Ovary (tissue), 10 donors: ENCODE measurements at regions of chr3 and their contacts with region 1.

Region 1: GRCh38 chr3:45656575-45657363 is 32.4 kb upstream of the SACM1L start:
- DNase-seq: peak; percentile 84 to 91 (median 87)
- H3K4me3 ChIP-seq: no peak overlapping the region
- H3K27ac ChIP-seq: no peak overlapping the region
- H3K4me1 ChIP-seq: peaks cover 3% of the 10 kb centered on the region
- H3K27me3 ChIP-seq: no peaks in the 10 kb centered on the region
- CTCF ChIP-seq: peak; percentile 87 to 93 (median 91)
- EP300 ChIP-seq: no peak
- POLR2A ChIP-seq: no peak

Region 2: GRCh38 chr3:45224824-45225464 is 431.8 kb before region 1 on chr3:
- intact Hi-C with region 1: loop called in 1 of 4 experiments (anchors 5 kb)
- DNase-seq: peak; percentile 37 to 76 (median 53)
- H3K4me3 ChIP-seq: peak overlapping the region; percentile 54
- H3K27ac ChIP-seq: no peak overlapping the region
- H3K4me1 ChIP-seq: no peaks in the 10 kb centered on the region
- H3K27me3 ChIP-seq: no peaks in the 10 kb centered on the region
- CTCF ChIP-seq: no peak
- EP300 ChIP-seq: no peak
- POLR2A ChIP-seq: no peak

Region 3: GRCh38 chr3:45507820-45508317 is 148.9 kb before region 1 on chr3:
- intact Hi-C with region 1: loop called (anchors 2 to 5 kb)
- DNase-seq: no peak
- H3K4me3 ChIP-seq: no peak overlapping the region
- H3K27ac ChIP-seq: no peak overlapping the region
- H3K4me1 ChIP-seq: no peaks in the 10 kb centered on the region
- H3K27me3 ChIP-seq: no peaks in the 10 kb centered on the region
- CTCF ChIP-seq: no peak
- EP300 ChIP-seq: no peak
- POLR2A ChIP-seq: no peak

Region 4: GRCh38 chr3:45516829-45517228 is 139.9 kb before region 1 on chr3:
- intact Hi-C with region 1: loop called in 3 of 4 experiments (anchors 2 to 5 kb)
- DNase-seq: no peak
- H3K4me3 ChIP-seq: no peak overlapping the region
- H3K27ac ChIP-seq: no peak overlapping the region
- H3K4me1 ChIP-seq: no peaks in the 10 kb centered on the region
- H3K27me3 ChIP-seq: no peaks in the 10 kb centered on the region
- CTCF ChIP-seq: no peak
- EP300 ChIP-seq: no peak
- POLR2A ChIP-seq: no peak

Region 5: GRCh38 chr3:45524565-45524964 is 132.2 kb before region 1 on chr3:
- intact Hi-C with region 1: loop called in 1 of 4 experiments (anchors 5 kb)
- DNase-seq: no peak
- H3K4me3 ChIP-seq: no peak overlapping the region
- H3K27ac ChIP-seq: no peak overlapping the region
- H3K4me1 ChIP-seq: no peaks in the 10 kb centered on the region
- H3K27me3 ChIP-seq: no peaks in the 10 kb centered on the region
- CTCF ChIP-seq: no peak
- EP300 ChIP-seq: no peak
- POLR2A ChIP-seq: no peak

Region 6: DNA sequence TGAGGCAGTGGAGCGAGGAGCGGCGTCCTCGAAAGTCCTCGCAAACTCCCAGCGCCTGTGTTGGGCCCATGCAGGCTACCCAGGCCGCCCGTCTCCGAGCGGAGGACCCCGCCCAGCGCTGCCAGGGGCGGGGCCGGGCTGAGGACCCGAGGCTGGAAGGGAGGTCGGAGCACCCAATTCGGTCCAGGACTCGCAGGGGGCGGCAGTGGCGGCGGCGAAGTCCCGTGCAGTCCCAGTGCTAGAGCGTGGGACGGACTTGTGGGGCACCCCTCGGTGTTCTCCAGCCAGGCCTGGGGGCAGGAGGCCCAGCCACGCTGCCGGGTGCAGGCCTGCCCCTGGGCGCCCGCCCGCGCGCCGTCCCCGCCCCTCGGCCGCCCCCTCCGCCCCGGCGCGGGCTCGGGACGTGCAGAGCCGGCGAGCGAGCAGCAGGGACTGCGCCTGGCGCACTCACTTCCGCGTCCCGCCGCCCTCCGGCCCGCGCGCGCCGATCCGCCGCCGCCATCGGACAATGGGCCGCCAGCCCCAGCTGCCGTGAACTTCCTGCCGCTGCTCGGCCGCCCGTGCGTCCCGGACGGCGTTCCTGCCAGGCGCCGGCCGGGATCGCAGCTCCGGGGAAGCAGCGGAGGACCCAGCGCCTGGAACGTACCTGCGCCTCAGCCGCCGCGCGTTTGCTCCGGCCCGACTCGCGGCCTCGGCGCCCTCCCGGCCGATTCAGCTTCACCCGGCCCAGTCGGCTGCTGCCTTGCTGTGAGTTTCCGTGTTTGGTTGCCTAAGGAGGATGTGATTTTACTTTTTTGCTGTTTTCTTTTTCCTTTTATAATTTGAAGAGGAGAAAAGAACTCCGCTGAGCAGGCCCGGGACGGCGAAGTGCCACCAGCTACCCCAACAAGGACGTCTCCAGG is 62.8 kb before region 1 on chr3:
- intact Hi-C with region 1: loop called (anchors 2 to 10 kb)
- DNase-seq: peak; percentile 59 to 80 (median 65)
- H3K4me3 ChIP-seq: peak overlapping the region; percentile 56
- H3K27ac ChIP-seq: peak overlapping the region; percentile 6 to 78
- H3K4me1 ChIP-seq: peaks cover 29% of the 10 kb centered on the region
- H3K27me3 ChIP-seq: no peaks in the 10 kb centered on the region
- CTCF ChIP-seq: peak in 1 of 3 donors; percentile 14
- EP300 ChIP-seq: no peak
- POLR2A ChIP-seq: no peak